ENCODE measurements at regions of chr16 and their contacts with region 1.

Region 1: GRCh38 chr16:7077636-7078035 is 255.0 kb upstream of the RBFOX1 start:
- DNase-seq: no peak
- ATAC-seq: no peak

Region 2: GRCh38 chr16:7137560-7138330 is 60.1 kb after region 1 on chr16:
- intact Hi-C with region 1: loop called in 1 of 2 experiments (anchors 10 kb)
- DNase-seq: no peak
- ATAC-seq: no peak

Measured in left cardiac atrium (tissue), 4 donors.